ENCODE measurements at regions of chr15 and their contacts with region 1.

Region 1: GRCh38 chr15:101294731-101295606 is at the start of gene SNRPA1:
- DNase-seq: peak; percentile 93 to 100 (median 97)
- ATAC-seq: peak; percentile 80 to 82
- H3K4me3 Mint-ChIP-seq: peak within 1 kb of the TSS; percentile 88 to 100 (median 97)
- H3K27ac Mint-ChIP-seq: peak within 1 kb of the TSS; percentile 92 to 99 (median 96)
- H3K4me1 Mint-ChIP-seq: peaks cover 14 to 53% (median 49%) of the 10 kb centered on the region in 4 donors
- H3K27me3 Mint-ChIP-seq: no peaks in the 10 kb centered on the region
- polyA plus RNA-seq, gene SNRPA1: 52.5 to 68.1 (median 58.1) TPM

Region 2: GRCh38 chr15:101115786-101116680 is 178.9 kb before region 1 on chr15:
- POLR2A ChIA-PET with region 1: no interaction called
- DNase-seq: peak in 1 of 10 donors; percentile 43
- ATAC-seq: no peak
- H3K4me3 Mint-ChIP-seq: no peak overlapping the region
- H3K27ac Mint-ChIP-seq: peak overlapping the region in 4 of 10 donors; percentile 39 to 81 (median 49)
- H3K4me1 Mint-ChIP-seq: peaks cover 0 to 8% (median 4%) of the 10 kb centered on the region in 4 donors
- H3K27me3 Mint-ChIP-seq: peaks cover 0 to 2% (median 0%) of the 10 kb centered on the region in 5 donors

Region 3: DNA sequence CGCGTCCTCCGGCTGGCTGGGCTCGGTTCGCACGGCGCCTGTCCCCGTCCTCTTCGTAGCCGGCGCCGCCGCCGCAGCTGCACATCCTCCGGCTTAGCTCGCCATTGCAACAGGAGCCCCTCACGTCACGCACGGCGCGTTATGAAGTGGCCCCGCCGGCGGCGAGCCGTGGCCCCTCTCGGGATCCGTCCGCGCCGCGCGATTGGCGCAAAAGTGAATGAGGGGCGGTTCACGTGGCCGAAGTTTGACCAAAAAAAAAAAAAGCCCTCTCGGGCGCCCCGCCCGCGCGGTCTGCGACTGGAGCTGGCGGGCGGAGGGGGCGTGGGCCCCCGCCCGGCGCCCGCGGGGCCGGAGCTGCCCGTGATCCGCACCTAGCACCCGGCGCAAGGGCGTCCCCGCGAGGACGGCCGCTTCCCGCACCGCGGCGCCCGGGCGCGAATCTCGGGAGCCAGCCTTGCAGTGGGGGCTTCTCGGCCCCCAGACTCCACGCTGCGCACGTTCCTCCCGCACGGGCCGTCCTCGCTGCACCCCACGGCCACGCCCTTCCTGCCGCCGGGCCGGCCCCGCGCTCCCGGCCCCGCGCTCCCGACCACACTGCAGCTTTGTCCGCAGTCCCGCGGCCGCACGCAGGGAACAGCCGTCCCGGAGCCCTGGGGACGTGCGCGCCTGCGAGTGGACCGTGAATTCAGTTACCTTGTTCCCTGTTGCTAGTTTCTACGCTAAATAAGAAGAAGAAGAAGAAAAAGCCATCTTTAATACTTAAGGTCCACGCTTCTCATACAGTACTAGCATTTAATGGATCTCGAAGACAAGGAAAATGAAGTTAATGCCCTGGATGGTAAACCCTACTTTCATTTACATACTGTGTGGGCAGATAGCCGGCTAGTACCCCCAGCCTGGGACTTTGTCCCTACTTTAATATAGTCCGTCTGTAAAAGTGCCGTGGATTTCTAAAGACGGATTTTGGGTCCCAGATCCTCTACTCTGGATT is 42.8 kb before region 1 on chr15 and contains the start of gene CHSY1:
- POLR2A ChIA-PET with region 1: interaction called, 20 read pairs
- DNase-seq: peak; percentile 78 to 93 (median 84)
- ATAC-seq: peak; percentile 83 to 84
- H3K4me3 Mint-ChIP-seq: peak within 1 kb of the TSS; percentile 90 to 96 (median 96)
- H3K27ac Mint-ChIP-seq: peak within 1 kb of the TSS; percentile 64 to 96 (median 92)
- H3K4me1 Mint-ChIP-seq: peaks cover 16 to 46% (median 38%) of the 10 kb centered on the region in 4 donors
- H3K27me3 Mint-ChIP-seq: no peaks in the 10 kb centered on the region
- polyA plus RNA-seq, gene CHSY1: 0.96 to 1.7 (median 1.6) TPM

Region 4: DNA sequence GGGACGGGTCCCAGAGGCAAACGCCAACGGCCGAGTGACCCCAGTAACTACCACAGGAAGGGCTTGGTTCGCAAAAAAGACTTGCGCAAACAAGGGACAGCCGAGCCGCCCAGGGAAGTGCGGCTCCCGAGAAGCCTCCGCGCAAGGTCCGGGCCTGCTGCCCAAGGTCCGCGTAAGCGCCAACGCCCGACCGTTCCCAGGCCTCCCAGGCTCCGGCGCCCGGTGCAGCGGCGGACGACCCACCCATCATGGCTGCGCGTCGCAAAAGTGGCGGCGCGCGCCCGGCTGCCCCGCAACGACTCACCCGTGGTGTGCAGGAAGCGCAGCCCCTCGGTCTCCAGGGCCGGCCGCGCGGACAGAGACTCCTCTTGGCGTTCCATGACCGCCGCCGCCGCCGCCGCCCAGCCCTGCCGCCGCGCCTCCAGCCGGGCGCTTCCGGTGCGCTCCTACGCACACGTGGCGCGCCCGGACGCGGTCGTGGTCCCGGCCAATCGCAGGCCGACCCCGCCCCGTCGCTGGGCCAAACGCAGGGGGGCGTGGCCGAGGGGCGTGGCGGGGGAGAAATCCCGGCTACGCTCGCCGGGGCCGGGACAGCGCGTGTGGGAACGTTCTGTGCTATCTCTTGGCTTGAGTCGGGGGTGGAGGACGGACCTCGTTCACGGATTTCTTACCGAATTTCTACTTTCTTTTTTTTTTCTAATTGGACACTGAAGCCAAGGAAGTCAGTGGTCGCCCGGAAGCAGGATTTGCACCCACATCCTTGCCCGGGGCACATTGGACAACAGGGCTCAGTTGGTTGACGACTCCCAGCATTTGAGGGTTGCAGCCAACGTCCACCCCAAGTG is 17.7 kb before region 1 on chr15 and contains the start of gene SELENOS:
- POLR2A ChIA-PET with region 1: interaction called, 10 read pairs
- DNase-seq: peak; percentile 74 to 96 (median 84)
- ATAC-seq: peak; percentile 96
- H3K4me3 Mint-ChIP-seq: peak within 1 kb of the TSS; percentile 90 to 100 (median 96)
- H3K27ac Mint-ChIP-seq: peak within 1 kb of the TSS; percentile 87 to 98 (median 95)
- H3K4me1 Mint-ChIP-seq: peaks cover 7 to 27% (median 20%) of the 10 kb centered on the region in 4 donors
- H3K27me3 Mint-ChIP-seq: no peaks in the 10 kb centered on the region
- polyA plus RNA-seq, gene SELENOS: 38.8 to 64.4 (median 39.8) TPM

Region 5: GRCh38 chr15:101320501-101321052 is 25.6 kb after region 1 on chr15:
- POLR2A ChIA-PET with region 1: interaction called, 26 read pairs
- DNase-seq: peak; percentile 32 to 81 (median 62)
- ATAC-seq: peak; percentile 99 to 100
- H3K4me3 Mint-ChIP-seq: peak overlapping the region; percentile 79 to 95 (median 86)
- H3K27ac Mint-ChIP-seq: peak overlapping the region; percentile 87 to 98 (median 96)
- H3K4me1 Mint-ChIP-seq: peaks cover 9 to 16% (median 14%) of the 10 kb centered on the region in 4 donors
- H3K27me3 Mint-ChIP-seq: peaks cover 0 to 12% (median 8%) of the 10 kb centered on the region in 5 donors

Region 6: GRCh38 chr15:101652098-101652782 is 357.3 kb after region 1 on chr15 and contains the start of gene TM2D3:
- POLR2A ChIA-PET with region 1: interaction called, 21 read pairs
- DNase-seq: peak; percentile 91 to 99 (median 96)
- ATAC-seq: peak; percentile 90 to 92
- H3K4me3 Mint-ChIP-seq: peak within 1 kb of the TSS; percentile 77 to 96 (median 92)
- H3K27ac Mint-ChIP-seq: peak within 1 kb of the TSS; percentile 91 to 98 (median 97)
- H3K4me1 Mint-ChIP-seq: peaks cover 9 to 48% (median 31%) of the 10 kb centered on the region in 4 donors
- H3K27me3 Mint-ChIP-seq: no peaks in the 10 kb centered on the region
- polyA plus RNA-seq, gene TM2D3: 28.1 to 32.3 (median 31.0) TPM